ENCODE measurements at regions of chr5 and their contacts with region 1.

Region 1: GRCh38 chr5:96536991-96537785 is 104.1 kb upstream of the PCSK1 start:
- DNase-seq: peak in 7 of 9 donors; percentile 54 to 79 (median 73)
- ATAC-seq: peak; percentile 97
- H3K4me3 ChIP-seq: peak overlapping the region; percentile 14
- H3K4me3 Mint-ChIP-seq: peak overlapping the region in 9 of 10 donors; percentile 26 to 76 (median 61)
- H3K27ac ChIP-seq: peak overlapping the region; percentile 41
- H3K27ac Mint-ChIP-seq: peak overlapping the region; percentile 82 to 94 (median 88)
- H3K4me1 ChIP-seq: peaks cover 20 to 23% of the 10 kb centered on the region in 2 donors
- H3K4me1 Mint-ChIP-seq: peaks cover 15 to 41% (median 32%) of the 10 kb centered on the region in 7 donors
- H3K27me3 ChIP-seq: no peaks in the 10 kb centered on the region
- H3K27me3 Mint-ChIP-seq: peaks cover 0 to 6% (median 0%) of the 10 kb centered on the region in 5 donors

Region 2: DNA sequence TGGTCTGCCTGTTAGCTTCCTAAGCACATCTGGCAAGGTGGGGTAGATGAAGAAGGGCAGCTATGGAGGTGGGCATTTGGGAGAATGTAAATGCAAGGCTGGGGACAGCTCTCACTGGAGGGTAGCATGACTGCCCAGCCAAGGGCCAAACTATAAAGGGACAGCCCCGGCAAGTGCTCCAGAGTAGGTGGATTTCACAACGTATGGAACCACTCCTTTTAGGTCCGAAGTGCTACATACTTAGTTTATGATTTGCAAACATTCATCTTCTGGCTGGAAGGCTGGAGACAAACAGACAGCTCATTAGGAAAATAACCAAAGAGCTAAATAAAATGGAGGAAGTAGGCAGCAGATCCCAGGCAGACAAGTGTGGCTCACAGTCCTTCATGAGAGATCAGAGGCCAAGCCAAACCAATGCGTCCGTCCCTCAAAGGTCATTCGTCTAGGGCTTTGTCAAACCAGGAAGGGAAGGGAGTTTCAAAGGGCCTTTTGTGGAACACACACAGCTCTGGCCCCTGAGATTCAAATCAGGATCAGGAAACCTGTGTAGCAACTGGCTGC is 672.2 kb before region 1 on chr5:
- CTCF ChIA-PET with region 1: no interaction called
- POLR2A ChIA-PET with region 1: no interaction called
- intact Hi-C with region 1: loop called (anchors 2 to 5 kb)
- DNase-seq: no peak
- ATAC-seq: no peak
- H3K4me3 ChIP-seq: no peak overlapping the region
- H3K4me3 Mint-ChIP-seq: no peak overlapping the region
- H3K27ac ChIP-seq: no peak overlapping the region
- H3K27ac Mint-ChIP-seq: peak overlapping the region in 1 of 9 donors; percentile 67
- H3K4me1 ChIP-seq: peaks cover 8% of the 10 kb centered on the region in 2 donors
- H3K4me1 Mint-ChIP-seq: peaks cover 22 to 47% (median 36%) of the 10 kb centered on the region in 7 donors
- H3K27me3 ChIP-seq: no peaks in the 10 kb centered on the region
- H3K27me3 Mint-ChIP-seq: peaks cover 0 to 10% (median 8%) of the 10 kb centered on the region in 5 donors

Region 3: DNA sequence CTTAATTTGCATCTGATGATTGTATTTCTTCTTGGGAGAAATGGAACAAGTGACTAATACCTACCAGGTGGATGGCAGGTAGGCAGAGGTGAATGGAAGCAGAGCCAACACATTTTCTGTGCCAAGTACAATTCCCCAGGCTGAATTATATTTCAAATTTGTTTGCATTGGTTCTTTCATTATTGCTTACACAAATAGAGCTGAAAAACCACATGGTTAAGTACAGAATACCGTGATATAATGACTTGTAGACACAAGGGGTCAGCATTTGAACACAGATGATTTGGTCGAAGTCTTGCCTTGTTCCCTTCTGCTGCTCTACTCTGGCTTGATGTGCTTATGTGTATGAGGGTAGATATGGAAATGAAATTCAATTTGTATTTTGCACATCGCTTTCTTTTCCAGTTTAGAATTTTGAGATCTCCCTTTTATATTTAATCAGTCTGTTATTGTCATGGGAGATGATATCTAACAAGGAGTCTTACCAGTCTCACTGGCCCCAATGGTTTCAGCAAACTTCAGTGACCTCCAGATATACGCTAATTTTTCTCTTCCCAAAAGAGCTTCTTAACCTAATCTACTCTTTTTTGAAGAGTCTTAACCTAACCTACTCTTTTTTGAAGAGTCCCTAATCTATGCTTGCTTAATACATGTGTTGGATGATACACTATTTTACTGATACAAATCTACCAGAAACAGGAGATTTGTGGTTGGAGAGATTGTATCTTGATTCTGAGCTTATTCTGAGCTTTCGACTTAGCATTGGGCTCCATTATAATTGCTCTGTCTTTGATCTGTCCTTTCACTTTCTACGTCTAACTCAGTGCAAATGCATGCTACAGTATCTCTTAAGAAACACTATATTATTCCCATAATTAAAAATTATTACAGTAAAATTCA is 192.3 kb before region 1 on chr5:
- CTCF ChIA-PET with region 1: no interaction called
- POLR2A ChIA-PET with region 1: no interaction called
- intact Hi-C with region 1: loop called (anchors 1 to 2 kb)
- DNase-seq: peak in 7 of 9 donors; percentile 33 to 70 (median 59)
- ATAC-seq: peak; percentile 91
- H3K4me3 ChIP-seq: no peak overlapping the region
- H3K4me3 Mint-ChIP-seq: peak overlapping the region; percentile 1 to 72 (median 48)
- H3K27ac ChIP-seq: no peak overlapping the region
- H3K27ac Mint-ChIP-seq: peak overlapping the region in 6 of 9 donors; percentile 3 to 53 (median 10)
- H3K4me1 ChIP-seq: peaks cover 6 to 7% of the 10 kb centered on the region in 2 donors
- H3K4me1 Mint-ChIP-seq: peaks cover 5 to 21% (median 18%) of the 10 kb centered on the region in 7 donors
- H3K27me3 ChIP-seq: no peaks in the 10 kb centered on the region
- H3K27me3 Mint-ChIP-seq: peaks cover 0 to 38% (median 8%) of the 10 kb centered on the region in 5 donors

Region 4: GRCh38 chr5:96562614-96563013 is 25.4 kb after region 1 on chr5:
- CTCF ChIA-PET with region 1: no interaction called
- POLR2A ChIA-PET with region 1: no interaction called
- intact Hi-C with region 1: no loop called
- DNase-seq: no peak
- ATAC-seq: no peak
- H3K4me3 ChIP-seq: no peak overlapping the region
- H3K4me3 Mint-ChIP-seq: no peak overlapping the region
- H3K27ac ChIP-seq: no peak overlapping the region
- H3K27ac Mint-ChIP-seq: no peak overlapping the region
- H3K4me1 ChIP-seq: peaks cover 0 to 3% of the 10 kb centered on the region in 2 donors
- H3K4me1 Mint-ChIP-seq: peaks cover 4 to 14% (median 9%) of the 10 kb centered on the region in 7 donors
- H3K27me3 ChIP-seq: no peaks in the 10 kb centered on the region
- H3K27me3 Mint-ChIP-seq: peaks cover 0 to 13% (median 5%) of the 10 kb centered on the region in 5 donors

Region 5: DNA sequence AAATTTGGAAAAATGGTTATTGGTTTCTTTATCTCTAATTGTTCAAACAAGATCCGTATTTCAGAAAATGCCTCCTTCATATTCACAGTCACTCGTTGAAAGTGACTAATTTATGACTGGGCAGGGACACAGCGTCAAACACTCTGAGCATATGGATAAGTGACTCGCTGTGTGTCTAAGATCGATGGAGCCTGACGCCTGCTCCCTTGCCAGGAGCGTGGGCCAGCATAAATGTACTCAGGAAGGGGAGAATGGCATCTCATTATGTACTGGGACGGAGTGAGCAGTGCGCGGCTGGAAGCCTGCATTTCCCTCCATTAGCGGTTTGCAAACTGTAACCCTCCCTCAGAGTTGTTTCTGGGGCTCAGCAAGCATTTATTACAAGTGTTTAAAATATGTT is 45.2 kb after region 1 on chr5:
- CTCF ChIA-PET with region 1: no interaction called
- POLR2A ChIA-PET with region 1: no interaction called
- intact Hi-C with region 1: loop called in 1 of 2 experiments (anchors 5 kb)
- DNase-seq: no peak
- ATAC-seq: no peak
- H3K4me3 ChIP-seq: no peak overlapping the region
- H3K4me3 Mint-ChIP-seq: no peak overlapping the region
- H3K27ac ChIP-seq: no peak overlapping the region
- H3K27ac Mint-ChIP-seq: no peak overlapping the region
- H3K4me1 ChIP-seq: no peaks in the 10 kb centered on the region
- H3K4me1 Mint-ChIP-seq: peaks cover 5 to 8% (median 7%) of the 10 kb centered on the region in 7 donors
- H3K27me3 ChIP-seq: no peaks in the 10 kb centered on the region
- H3K27me3 Mint-ChIP-seq: peaks cover 18 to 49% (median 38%) of the 10 kb centered on the region in 5 donors

Region 6: DNA sequence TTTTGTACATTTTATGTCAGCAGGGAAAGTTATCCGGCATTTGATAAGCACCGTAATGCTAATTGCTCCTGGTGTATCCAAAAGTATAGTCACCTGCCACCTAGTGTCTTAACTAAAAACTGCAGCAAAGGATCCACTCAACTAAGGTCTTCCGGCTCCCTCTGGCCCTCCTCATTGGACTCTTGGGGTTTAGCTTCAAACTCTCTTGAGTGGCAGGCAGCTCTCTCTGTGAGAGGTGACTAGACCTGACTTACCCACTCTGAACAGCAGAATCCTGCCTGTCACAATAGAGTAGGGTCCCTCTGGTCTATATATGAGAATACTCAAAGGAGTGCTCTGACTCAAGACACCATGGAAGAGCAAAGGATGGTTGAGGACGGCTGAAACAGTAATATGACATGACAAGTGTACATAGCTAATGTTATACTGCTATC is 64.6 kb after region 1 on chr5:
- CTCF ChIA-PET with region 1: no interaction called
- POLR2A ChIA-PET with region 1: no interaction called
- intact Hi-C with region 1: loop called (anchors 1 to 5 kb)
- DNase-seq: peak in 7 of 9 donors; percentile 36 to 68 (median 65)
- ATAC-seq: peak; percentile 87
- H3K4me3 ChIP-seq: no peak overlapping the region
- H3K4me3 Mint-ChIP-seq: peak overlapping the region in 1 of 10 donors; percentile 2
- H3K27ac ChIP-seq: no peak overlapping the region
- H3K27ac Mint-ChIP-seq: no peak overlapping the region
- H3K4me1 ChIP-seq: no peaks in the 10 kb centered on the region
- H3K4me1 Mint-ChIP-seq: peaks cover 0 to 3% (median 0%) of the 10 kb centered on the region in 7 donors
- H3K27me3 ChIP-seq: no peaks in the 10 kb centered on the region
- H3K27me3 Mint-ChIP-seq: peaks cover 4 to 16% (median 4%) of the 10 kb centered on the region in 5 donors